ENCODE measurements at regions of chr3 and their contacts with region 1.

Region 1: GRCh38 chr3:56783644-56784447 is 17.9 kb downstream of the ARHGEF3 start:
- DNase-seq: peak; percentile 72
- H3K4me3 Mint-ChIP-seq: peak overlapping the region; percentile 81
- H3K27ac Mint-ChIP-seq: peak overlapping the region; percentile 95
- H3K4me1 Mint-ChIP-seq: peaks cover 97% of the 10 kb centered on the region
- H3K27me3 Mint-ChIP-seq: no peaks in the 10 kb centered on the region

Region 2: GRCh38 chr3:56222866-56223265 is 561.0 kb before region 1 on chr3:
- intact Hi-C with region 1: no loop called
- DNase-seq: no peak
- H3K4me3 Mint-ChIP-seq: no peak overlapping the region
- H3K27ac Mint-ChIP-seq: no peak overlapping the region
- H3K4me1 Mint-ChIP-seq: no peaks in the 10 kb centered on the region
- H3K27me3 Mint-ChIP-seq: no peaks in the 10 kb centered on the region

Region 3: DNA sequence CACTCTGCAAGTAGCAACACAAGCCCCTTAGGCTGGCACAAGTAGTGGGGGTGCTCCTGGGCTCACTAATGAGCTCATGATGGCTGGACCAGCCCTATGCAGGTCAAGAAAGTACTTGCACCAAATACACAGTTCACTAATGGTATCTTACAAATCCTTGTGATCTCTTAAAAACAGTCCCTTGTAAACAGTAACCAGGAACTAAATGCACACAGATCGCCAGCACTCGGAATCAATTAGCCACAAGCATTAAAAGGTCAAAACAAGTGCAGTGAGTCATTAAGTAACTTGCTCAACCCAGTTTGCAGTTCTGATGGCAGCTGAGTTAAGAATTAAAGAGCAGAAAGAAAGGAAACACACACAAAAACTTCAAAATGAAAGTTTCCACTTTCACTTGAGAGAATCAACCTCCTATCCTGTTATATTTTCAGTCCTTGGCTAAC is 25.3 kb before region 1 on chr3:
- intact Hi-C with region 1: loop called (anchors 1 kb)
- DNase-seq: peak; percentile 9
- H3K4me3 Mint-ChIP-seq: peak overlapping the region; percentile 53
- H3K27ac Mint-ChIP-seq: peak overlapping the region; percentile 79
- H3K4me1 Mint-ChIP-seq: peaks cover 81% of the 10 kb centered on the region
- H3K27me3 Mint-ChIP-seq: no peaks in the 10 kb centered on the region

Region 4: GRCh38 chr3:56894881-56895431 is 111.1 kb after region 1 on chr3:
- intact Hi-C with region 1: no loop called
- DNase-seq: no peak
- H3K4me3 Mint-ChIP-seq: no peak overlapping the region
- H3K27ac Mint-ChIP-seq: no peak overlapping the region
- H3K4me1 Mint-ChIP-seq: peaks cover 46% of the 10 kb centered on the region
- H3K27me3 Mint-ChIP-seq: peaks cover 9% of the 10 kb centered on the region

Region 5: DNA sequence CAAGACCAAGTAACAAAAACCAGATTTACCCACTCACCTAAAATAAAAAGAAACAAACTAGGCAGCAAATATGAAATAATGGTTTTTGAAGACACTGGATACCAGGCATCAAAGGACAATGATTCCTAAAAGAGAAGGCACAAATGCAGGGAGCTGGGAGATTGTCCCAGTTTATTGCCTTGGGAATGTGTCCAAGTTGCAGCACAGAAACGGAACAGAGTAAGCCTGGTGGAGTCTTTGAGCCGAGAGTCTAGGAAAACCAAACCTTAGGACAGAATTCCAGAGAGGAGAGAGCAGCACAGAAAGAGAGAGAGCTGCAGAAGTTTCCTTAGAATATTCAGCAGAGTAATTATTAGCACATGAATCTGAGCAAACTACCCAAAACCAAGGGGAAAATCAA is 821.1 kb after region 1 on chr3:
- intact Hi-C with region 1: no loop called
- DNase-seq: no peak
- H3K4me3 Mint-ChIP-seq: no peak overlapping the region
- H3K27ac Mint-ChIP-seq: no peak overlapping the region
- H3K4me1 Mint-ChIP-seq: peaks cover 6% of the 10 kb centered on the region
- H3K27me3 Mint-ChIP-seq: no peaks in the 10 kb centered on the region

Measured in activated T-helper 1 cell treated with anti-CD3 and anti-CD28 coated beads, Interleukin-12 subunit alpha, Interleukin-12 subunit beta, Interleukin-2, Interleukin-4 antibody, amounts not matched to agents 30 ng/mL and 10 ng/mL and 1 ng/mL, durations not matched to agents 14 hours and 24 hours and 36 hours (primary cell).